ENCODE measurements at regions of chr11 and their contacts with region 1.

Region 1: GRCh38 chr11:96342961-96343711 is at the start of gene MAML2:
- DNase-seq: peak; percentile 96
- ATAC-seq: peak; percentile 84
- H3K4me3 Mint-ChIP-seq: peak within 1 kb of the TSS; percentile 86
- H3K27ac Mint-ChIP-seq: peak within 1 kb of the TSS; percentile 94
- H3K4me1 Mint-ChIP-seq: peaks cover 23% of the 10 kb centered on the region
- H3K27me3 Mint-ChIP-seq: no peaks in the 10 kb centered on the region
- CTCF ChIP-seq: peak; percentile 85
- total RNA-seq, gene MAML2: 11.8 to 12.5 TPM

Region 2: DNA sequence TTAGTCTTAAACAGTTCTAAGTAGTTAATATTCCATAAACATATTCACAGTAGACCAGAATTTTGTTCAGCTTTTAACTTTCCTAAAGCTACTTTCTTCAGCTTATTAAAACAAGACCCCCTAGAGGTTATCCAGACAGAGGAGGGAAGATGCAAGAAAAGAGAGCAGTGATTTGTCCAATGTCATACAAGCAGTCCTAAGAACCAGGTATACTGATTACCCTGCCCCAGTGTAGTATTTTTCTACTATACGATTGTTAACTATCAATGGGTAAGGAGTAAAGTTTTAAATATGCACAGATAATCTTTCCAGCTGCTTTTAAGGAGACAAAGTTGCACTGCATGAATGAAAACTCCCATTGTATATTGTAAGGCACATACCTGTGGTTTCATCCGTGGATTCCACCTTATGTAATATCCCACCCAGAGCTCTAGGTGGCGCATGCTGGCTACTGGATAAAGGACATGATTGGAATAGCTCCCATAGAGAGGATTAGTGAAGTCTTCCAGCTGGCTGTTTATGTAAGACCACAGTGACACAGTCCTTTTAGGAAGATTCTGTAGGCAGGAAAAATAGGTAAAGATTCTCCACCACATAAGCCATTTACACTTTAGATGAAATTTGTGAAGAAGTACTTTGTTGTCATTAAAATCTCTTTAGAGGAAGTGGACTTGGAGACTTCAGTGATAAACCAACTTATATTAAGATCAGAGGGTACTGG is 507.2 kb before region 1 on chr11:
- CTCF ChIA-PET with region 1: interaction called, 18 read pairs
- POLR2A ChIA-PET with region 1: no interaction called
- intact Hi-C with region 1: no loop called
- DNase-seq: peak; percentile 60
- ATAC-seq: peak; percentile 93
- H3K4me3 Mint-ChIP-seq: no peak overlapping the region
- H3K27ac Mint-ChIP-seq: no peak overlapping the region
- H3K4me1 Mint-ChIP-seq: peaks cover 6% of the 10 kb centered on the region
- H3K27me3 Mint-ChIP-seq: no peaks in the 10 kb centered on the region
- CTCF ChIP-seq: peak; percentile 85

Region 3: DNA sequence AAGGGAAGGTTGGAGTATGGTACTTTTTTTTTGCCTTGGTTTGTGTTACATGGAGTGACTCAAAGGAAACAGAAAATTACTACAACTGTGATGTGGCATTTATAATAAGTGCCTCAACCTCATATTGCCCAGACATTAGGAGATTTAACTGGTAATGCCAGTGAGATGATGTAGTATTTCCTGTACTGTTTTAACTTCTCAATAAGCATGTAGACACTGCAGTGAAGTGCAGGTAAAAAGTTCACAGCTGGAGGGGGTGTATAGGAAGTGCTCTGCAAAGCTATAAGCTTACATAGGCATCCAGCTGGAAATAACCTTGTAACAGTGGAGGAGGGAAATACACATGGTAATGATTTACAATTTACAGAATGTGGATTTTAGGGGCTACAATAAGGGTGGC is 281.0 kb before region 1 on chr11:
- CTCF ChIA-PET with region 1: interaction called, 7 read pairs
- POLR2A ChIA-PET with region 1: interaction called, 5 read pairs
- intact Hi-C with region 1: loop called (anchors 5 kb)
- DNase-seq: peak; percentile 67
- ATAC-seq: peak; percentile 89
- H3K4me3 Mint-ChIP-seq: peak overlapping the region; percentile 1
- H3K27ac Mint-ChIP-seq: peak overlapping the region; percentile 85
- H3K4me1 Mint-ChIP-seq: peaks cover 72% of the 10 kb centered on the region
- H3K27me3 Mint-ChIP-seq: no peaks in the 10 kb centered on the region
- CTCF ChIP-seq: no peak

Region 4: DNA sequence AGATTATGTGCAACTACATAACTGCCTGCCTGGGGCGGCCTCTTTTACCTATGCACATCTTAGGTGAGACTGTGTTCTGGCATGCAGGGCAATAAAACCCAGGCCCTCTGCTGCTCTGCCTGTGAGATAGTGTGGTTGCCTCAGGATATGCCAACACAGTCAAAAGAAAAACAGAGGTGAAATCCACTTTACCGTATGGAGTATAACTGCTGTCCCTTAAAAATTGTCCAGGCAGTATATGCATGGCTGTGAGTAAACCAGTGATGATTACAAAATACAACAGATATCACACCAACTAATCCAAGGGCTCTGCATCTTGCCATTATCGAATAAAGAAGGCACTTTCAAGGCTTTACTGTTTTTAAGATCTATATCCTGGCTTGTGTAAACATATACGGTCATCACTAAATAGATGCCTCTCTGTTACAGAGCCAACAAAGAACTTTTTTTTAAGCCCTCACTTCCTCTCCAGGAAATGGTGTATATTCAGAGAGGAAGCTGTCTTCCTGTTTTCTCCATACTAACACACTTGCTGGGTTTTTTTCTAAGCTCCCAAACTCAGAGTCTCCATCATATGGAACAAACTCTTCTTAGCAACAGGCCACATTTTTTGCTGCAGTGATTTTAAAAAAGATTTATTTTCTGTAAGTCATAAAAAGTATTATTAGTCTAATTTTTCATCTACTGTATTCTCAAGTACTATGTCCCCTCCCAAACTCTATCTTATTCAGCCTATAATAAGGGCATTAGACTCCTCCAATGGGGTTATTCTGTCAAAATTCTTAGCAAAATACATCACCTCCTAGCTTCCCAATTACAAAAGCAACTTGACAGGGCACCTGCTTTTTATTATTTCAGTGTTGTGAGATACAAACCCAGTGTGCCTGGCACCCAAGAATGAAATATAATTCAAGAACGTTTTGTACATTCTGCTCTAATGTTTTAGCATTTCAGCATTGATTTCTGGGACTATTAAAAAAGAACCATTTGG is 135.4 kb before region 1 on chr11:
- CTCF ChIA-PET with region 1: interaction called, 12 read pairs
- POLR2A ChIA-PET with region 1: interaction called, 6 read pairs
- intact Hi-C with region 1: loop called (anchors 5 kb)
- DNase-seq: peak; percentile 46
- ATAC-seq: peak; percentile 18
- H3K4me3 Mint-ChIP-seq: peak overlapping the region; percentile 47
- H3K27ac Mint-ChIP-seq: peak overlapping the region; percentile 89
- H3K4me1 Mint-ChIP-seq: peaks cover 87% of the 10 kb centered on the region
- H3K27me3 Mint-ChIP-seq: no peaks in the 10 kb centered on the region
- CTCF ChIP-seq: no peak

Region 5: DNA sequence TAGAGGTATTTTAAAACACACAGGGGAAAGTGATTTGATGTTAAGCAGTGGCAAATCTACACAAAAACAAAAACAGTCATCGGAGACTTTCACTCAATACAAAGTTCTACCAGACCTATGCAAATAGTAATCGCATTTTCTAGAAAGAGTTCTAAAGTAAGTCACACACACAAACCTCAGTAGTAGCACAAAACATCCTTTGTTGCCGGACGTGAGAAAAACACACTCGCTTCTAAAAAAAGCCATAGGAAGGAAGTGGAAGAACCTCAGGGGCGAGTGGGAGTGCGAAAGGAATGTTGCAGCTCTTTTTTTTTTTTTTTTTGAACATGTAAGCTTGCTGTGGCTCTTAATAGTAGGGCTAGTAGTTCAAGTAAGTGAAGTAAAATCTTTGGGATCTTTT is 89.0 kb before region 1 on chr11:
- CTCF ChIA-PET with region 1: interaction called, 35 read pairs
- POLR2A ChIA-PET with region 1: interaction called, 7 read pairs
- intact Hi-C with region 1: loop called (anchors 2 kb)
- DNase-seq: peak; percentile 33
- ATAC-seq: no peak
- H3K4me3 Mint-ChIP-seq: peak overlapping the region; percentile 65
- H3K27ac Mint-ChIP-seq: peak overlapping the region; percentile 90
- H3K4me1 Mint-ChIP-seq: peaks cover 84% of the 10 kb centered on the region
- H3K27me3 Mint-ChIP-seq: no peaks in the 10 kb centered on the region
- CTCF ChIP-seq: no peak

Region 6: DNA sequence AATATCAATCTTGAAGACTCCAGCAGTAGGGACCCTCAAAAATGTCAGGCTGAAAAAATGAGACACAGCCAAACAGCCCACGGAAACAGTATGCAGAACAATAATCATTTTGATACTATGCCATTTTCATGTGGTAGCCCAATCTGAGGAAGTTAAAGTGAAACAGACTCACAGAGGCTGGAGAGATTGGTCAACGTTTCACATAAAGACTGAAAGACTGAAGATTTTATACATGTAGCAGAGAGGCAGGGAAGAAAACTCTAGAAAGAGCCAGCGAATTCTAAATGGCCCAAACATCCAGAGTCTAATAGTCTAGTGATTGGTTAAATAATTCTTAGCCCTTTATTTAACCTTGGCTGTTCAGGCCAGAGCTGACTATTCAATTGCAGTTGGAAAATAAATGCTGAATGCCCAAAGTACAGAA is 49.5 kb before region 1 on chr11:
- CTCF ChIA-PET with region 1: interaction called, 43 read pairs
- POLR2A ChIA-PET with region 1: interaction called, 4 read pairs
- intact Hi-C with region 1: loop called (anchors 2 kb)
- DNase-seq: peak; percentile 46
- ATAC-seq: peak; percentile 87
- H3K4me3 Mint-ChIP-seq: peak overlapping the region; percentile 3
- H3K27ac Mint-ChIP-seq: peak overlapping the region; percentile 77
- H3K4me1 Mint-ChIP-seq: peaks cover 78% of the 10 kb centered on the region
- H3K27me3 Mint-ChIP-seq: no peaks in the 10 kb centered on the region
- CTCF ChIP-seq: no peak

Region 7: DNA sequence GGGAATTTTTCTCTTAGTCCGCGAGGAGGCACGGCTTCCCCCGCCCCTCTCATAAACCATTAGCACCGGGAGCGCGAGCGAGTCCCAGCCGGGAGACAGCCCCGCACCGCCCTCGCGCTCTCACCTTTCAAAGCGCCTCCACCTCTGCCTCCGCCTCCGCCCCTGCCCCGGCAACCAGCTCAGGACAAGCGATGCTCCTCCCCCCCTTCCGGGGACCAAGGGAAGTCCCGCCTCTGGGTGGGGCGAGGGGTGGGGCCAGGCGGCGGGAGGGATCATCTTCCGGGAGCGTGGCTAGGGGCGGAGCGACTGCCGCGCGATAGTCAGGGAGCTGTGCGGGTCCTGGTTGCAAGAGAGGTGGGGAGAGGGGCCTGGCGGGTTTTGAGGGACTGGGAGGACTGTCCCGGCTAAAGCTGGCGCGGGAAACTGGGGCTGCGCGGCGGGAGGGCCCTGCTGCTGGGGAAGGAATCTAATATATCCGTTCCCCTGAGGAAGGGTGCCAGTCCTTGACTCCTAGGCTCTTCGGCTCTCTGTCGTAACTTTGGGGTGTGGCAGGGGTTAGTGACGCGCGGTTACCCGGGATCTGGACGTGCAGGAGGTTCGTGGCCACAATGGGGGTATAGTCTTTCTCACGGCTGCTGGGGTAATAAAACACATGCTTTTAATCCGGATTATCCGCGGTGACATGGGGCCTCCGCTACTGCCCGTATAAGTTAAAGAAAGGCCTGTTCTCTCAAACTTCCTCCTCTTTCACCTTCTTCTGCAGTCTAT is 46.8 kb after region 1 on chr11 and contains the starts of genes CCDC82 and JRKL:
- CTCF ChIA-PET with region 1: interaction called, 26 read pairs
- POLR2A ChIA-PET with region 1: interaction called, 4 read pairs
- intact Hi-C with region 1: loop called (anchors 5 kb)
- DNase-seq: peak; percentile 99
- ATAC-seq: peak; percentile 98
- H3K4me3 Mint-ChIP-seq: peak within 1 kb of the TSS; percentile 89
- H3K27ac Mint-ChIP-seq: peak within 1 kb of the TSS; percentile 96
- H3K4me1 Mint-ChIP-seq: peaks cover 48% of the 10 kb centered on the region
- H3K27me3 Mint-ChIP-seq: no peaks in the 10 kb centered on the region
- CTCF ChIP-seq: no peak
- total RNA-seq, gene CCDC82: 25.3 to 27.0 TPM
- total RNA-seq, gene JRKL: 13.3 to 13.5 TPM

Region 8: GRCh38 chr11:96680211-96681018 is 337.3 kb after region 1 on chr11:
- CTCF ChIA-PET with region 1: no interaction called
- POLR2A ChIA-PET with region 1: no interaction called
- intact Hi-C with region 1: no loop called
- DNase-seq: no peak
- ATAC-seq: no peak
- H3K4me3 Mint-ChIP-seq: no peak overlapping the region
- H3K27ac Mint-ChIP-seq: no peak overlapping the region
- H3K4me1 Mint-ChIP-seq: no peaks in the 10 kb centered on the region
- H3K27me3 Mint-ChIP-seq: no peaks in the 10 kb centered on the region
- CTCF ChIP-seq: no peak

Measured in activated CD8-positive, alpha-beta T cell treated with anti-CD3 and anti-CD28 coated beads for 36 hours (primary cell).